Endothelial cell of umbilical vein (primary cell): ENCODE measurements at regions of chr16 and their contacts with region 1.

Region 1: GRCh38 chr16:18932243-18932981 is 6.2 kb upstream of the SMG1 start:
- DNase-seq: no peak
- H3K4me3 ChIP-seq: no peak overlapping the region
- H3K27ac ChIP-seq: no peak overlapping the region
- H3K4me1 ChIP-seq: no peaks in the 10 kb centered on the region
- H3K27me3 ChIP-seq: peaks cover 0 to 2% of the 10 kb centered on the region in 2 experiments
- CTCF ChIP-seq: no peak
- POLR2A ChIP-seq: no peak

Region 2: GRCh38 chr16:18950469-18951185 is 18.2 kb after region 1 on chr16:
- CTCF ChIA-PET with region 1: interaction called, 5 read pairs
- POLR2A ChIA-PET with region 1: no interaction called
- dilution Hi-C with region 1: no loop called
- intact Hi-C with region 1: loop called (anchors 2 kb)
- DNase-seq: no peak
- H3K4me3 ChIP-seq: no peak overlapping the region
- H3K27ac ChIP-seq: no peak overlapping the region
- H3K4me1 ChIP-seq: no peaks in the 10 kb centered on the region
- H3K27me3 ChIP-seq: no peaks in the 10 kb centered on the region
- CTCF ChIP-seq: no peak
- POLR2A ChIP-seq: no peak